ENCODE measurements at regions of chr17 and their contacts with region 1.

Region 1: GRCh38 chr17:75959051-75959838 is 18.4 kb upstream of the FBF1 start:
- DNase-seq: peak; percentile 79
- ATAC-seq: peak; percentile 94
- H3K4me3 ChIP-seq: peak overlapping the region; percentile 36; the same call in 1 of the 2 replicates
- H3K27ac ChIP-seq: peak overlapping the region; percentile 78
- H3K4me1 ChIP-seq: peaks cover 21% of the 10 kb centered on the region
- H3K27me3 ChIP-seq: no peaks in the 10 kb centered on the region
- CTCF ChIP-seq: no peak

Region 2: GRCh38 chr17:75896415-75897159 is 62.7 kb before region 1 on chr17 and contains the start of gene TRIM65:
- CTCF ChIA-PET with region 1: no interaction called
- POLR2A ChIA-PET with region 1: no interaction called
- intact Hi-C with region 1: no loop called
- DNase-seq: peak; percentile 91
- ATAC-seq: peak; percentile 87
- H3K4me3 ChIP-seq: peak within 1 kb of the TSS; percentile 83
- H3K27ac ChIP-seq: peak within 1 kb of the TSS; percentile 74
- H3K4me1 ChIP-seq: peaks cover 14% of the 10 kb centered on the region
- H3K27me3 ChIP-seq: no peaks in the 10 kb centered on the region
- CTCF ChIP-seq: peak; percentile 40
- total RNA-seq, gene TRIM65: 32.3 and 48.9 TPM in 2 replicates

Region 3: DNA sequence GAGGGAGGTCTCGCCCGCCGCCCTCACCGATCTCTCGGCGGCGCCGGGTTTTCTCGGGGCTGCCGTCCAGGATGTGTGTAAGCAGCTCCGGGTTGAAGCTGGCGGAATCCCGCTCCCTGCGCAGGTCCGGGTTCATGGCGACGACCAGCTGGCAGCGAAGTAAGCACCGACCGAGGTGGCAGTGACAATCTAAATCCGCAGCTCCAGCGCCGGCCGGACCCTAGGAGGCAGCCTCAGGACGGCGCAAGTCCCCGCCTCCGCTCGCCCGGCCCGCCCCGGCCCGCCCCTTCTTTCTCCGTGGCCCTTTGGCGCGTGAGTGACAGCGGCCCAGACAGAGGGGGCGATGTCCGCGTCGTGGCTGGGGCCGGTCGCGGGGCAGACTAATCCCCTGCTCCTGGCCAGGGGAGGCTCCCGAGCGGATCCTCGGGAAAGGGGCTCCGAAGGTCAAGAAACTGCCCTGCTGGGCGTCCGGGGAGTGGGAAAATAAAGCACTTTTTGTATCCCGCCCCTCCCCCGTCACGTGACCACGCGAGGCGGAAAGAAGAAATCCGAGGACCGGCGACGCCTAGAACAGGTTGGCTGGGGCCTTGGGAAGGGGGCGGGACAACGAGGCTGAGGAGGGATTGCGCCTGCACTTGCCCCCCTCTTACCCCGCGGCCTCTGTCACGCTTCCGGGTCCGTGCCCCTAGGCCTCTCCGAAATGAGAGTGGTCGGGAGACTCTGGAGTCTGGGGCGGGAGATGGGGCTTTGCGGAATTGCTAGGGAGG is 19.9 kb after region 1 on chr17 and contains the starts of genes ACOX1 and TEN1:
- CTCF ChIA-PET with region 1: no interaction called
- POLR2A ChIA-PET with region 1: interaction called, 4 read pairs
- intact Hi-C with region 1: loop called (anchors 2 kb)
- DNase-seq: peak; percentile 98
- ATAC-seq: peak; percentile 93
- H3K4me3 ChIP-seq: peak within 1 kb of the TSS; percentile 94
- H3K27ac ChIP-seq: peak within 1 kb of the TSS; percentile 82
- H3K4me1 ChIP-seq: peaks cover 40% of the 10 kb centered on the region
- H3K27me3 ChIP-seq: no peaks in the 10 kb centered on the region
- CTCF ChIP-seq: peak; percentile 45; the same call in 1 of the 2 replicates
- total RNA-seq, gene ACOX1: 63.2 and 74.9 TPM in 2 replicates
- total RNA-seq, gene TEN1: 58.3 and 62.4 TPM in 2 replicates